ENCODE measurements at regions of chr14 and their contacts with region 1.

Region 1: DNA sequence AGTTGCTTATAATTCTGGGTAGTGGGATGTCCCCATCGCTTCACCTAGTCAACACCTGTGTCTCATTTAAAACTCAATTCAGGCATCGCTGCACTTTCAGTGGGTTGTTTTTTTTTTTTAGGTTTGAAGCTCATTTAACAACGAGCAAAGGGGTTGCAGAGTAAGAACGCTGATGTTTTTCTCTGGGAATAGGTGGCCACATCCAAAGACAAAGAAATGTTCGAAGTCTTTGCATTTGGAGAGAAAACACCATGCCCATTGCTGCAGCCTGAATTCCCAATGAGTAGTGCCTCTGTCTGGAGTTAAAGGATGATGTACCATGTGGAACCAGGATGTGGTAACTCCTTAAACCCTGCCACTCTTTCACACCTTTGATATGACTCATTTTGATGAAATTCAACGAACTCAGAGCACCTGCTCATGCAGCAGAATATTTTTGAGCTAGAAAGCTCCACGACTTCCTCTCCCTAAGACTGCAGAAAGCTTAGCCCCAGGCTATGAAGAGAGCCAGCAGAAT is 35.1 kb upstream of the BATF start:
- DNase-seq: no peak
- ATAC-seq: no peak
- H3K4me3 ChIP-seq: no peak overlapping the region
- H3K27ac ChIP-seq: no peak overlapping the region
- H3K4me1 ChIP-seq: no peaks in the 10 kb centered on the region
- H3K27me3 ChIP-seq: peaks cover 30% of the 10 kb centered on the region
- CTCF ChIP-seq: no peak
- POLR2A ChIP-seq: no peak
- RAD21 ChIP-seq: no peak

Region 2: GRCh38 chr14:75132382-75133086 is 354.7 kb before region 1 on chr14:
- CTCF ChIA-PET with region 1: no interaction called
- POLR2A ChIA-PET with region 1: no interaction called
- dilution Hi-C with region 1: no loop called
- in situ Hi-C with region 1: loop called (anchors 10 kb)
- intact Hi-C with region 1: loop called (anchors 2 kb)
- DNase-seq: peak; percentile 74
- ATAC-seq: peak; percentile 95
- H3K4me3 ChIP-seq: no peak overlapping the region
- H3K27ac ChIP-seq: no peak overlapping the region
- H3K4me1 ChIP-seq: no peaks in the 10 kb centered on the region
- H3K27me3 ChIP-seq: no peaks in the 10 kb centered on the region
- CTCF ChIP-seq: peak; percentile 81
- POLR2A ChIP-seq: 0 out of 2 replicates have a peak, but pooled peaks have one; percentile 39
- RAD21 ChIP-seq: peak; percentile 89

Region 3: DNA sequence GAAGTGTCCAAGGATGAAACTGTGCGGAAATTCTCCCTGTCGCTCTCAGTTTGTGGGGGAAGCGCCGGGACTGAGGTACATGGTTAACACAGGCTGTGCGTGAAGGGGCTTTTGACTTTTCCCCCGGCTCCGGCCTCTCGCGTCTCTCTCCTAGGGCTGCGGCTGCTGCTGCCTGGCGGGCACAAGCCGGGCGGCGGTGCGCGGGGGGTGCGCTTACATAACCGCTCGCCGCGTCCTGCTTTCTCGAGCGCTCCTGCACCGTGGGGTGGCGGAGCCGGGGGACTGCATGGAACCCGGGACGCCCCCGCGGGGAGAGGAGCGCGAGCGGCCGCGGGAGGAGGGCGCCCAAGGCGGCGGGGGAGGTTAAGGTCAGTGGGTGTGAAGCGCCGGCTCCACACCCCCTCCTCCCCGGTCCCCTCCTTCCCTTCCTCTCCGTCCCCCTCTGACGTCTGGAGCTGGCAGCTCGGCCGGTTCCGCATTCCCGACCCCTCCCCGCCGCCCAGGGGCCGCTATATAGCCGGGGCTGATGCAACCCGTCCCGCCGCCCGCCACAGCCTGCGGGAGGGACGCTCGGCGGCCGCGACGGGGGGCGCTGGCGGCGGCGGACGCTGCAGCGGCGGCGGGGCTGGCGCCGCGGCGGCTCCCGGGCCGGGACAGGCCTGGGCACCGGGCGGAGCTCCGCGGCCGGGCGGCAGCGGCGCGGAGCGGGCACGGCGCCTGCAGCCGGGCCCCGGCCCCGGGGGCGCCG is 59.6 kb before region 1 on chr14 and contains the start of gene JDP2:
- CTCF ChIA-PET with region 1: interaction called, 4 read pairs
- POLR2A ChIA-PET with region 1: no interaction called
- dilution Hi-C with region 1: no loop called
- in situ Hi-C with region 1: no loop called
- intact Hi-C with region 1: loop called (anchors 1 kb)
- DNase-seq: peak; percentile 76
- ATAC-seq: peak; percentile 81
- H3K4me3 ChIP-seq: peak within 1 kb of the TSS; percentile 58
- H3K27ac ChIP-seq: peak within 1 kb of the TSS; percentile 83
- H3K4me1 ChIP-seq: peaks cover 21% of the 10 kb centered on the region
- H3K27me3 ChIP-seq: no peaks in the 10 kb centered on the region
- CTCF ChIP-seq: 0 out of 2 replicates have a peak, but pooled peaks have one; percentile 8
- POLR2A ChIP-seq: peak; percentile 82
- RAD21 ChIP-seq: 0 out of 2 replicates have a peak, but pooled peaks have one; percentile 12
- total RNA-seq, gene JDP2: 35.7 and 38.9 TPM in 2 replicates

Region 4: GRCh38 chr14:75560962-75561432 is 73.8 kb after region 1 on chr14:
- CTCF ChIA-PET with region 1: no interaction called
- POLR2A ChIA-PET with region 1: no interaction called
- dilution Hi-C with region 1: no loop called
- in situ Hi-C with region 1: no loop called
- intact Hi-C with region 1: loop called (anchors 1 kb)
- DNase-seq: peak; percentile 67
- ATAC-seq: peak; percentile 95
- H3K4me3 ChIP-seq: no peak overlapping the region
- H3K27ac ChIP-seq: no peak overlapping the region
- H3K4me1 ChIP-seq: no peaks in the 10 kb centered on the region; the same call in 1 of the 2 replicates
- H3K27me3 ChIP-seq: peaks cover 26% of the 10 kb centered on the region
- CTCF ChIP-seq: peak; percentile 84
- POLR2A ChIP-seq: 0 out of 2 replicates have a peak, but pooled peaks have one; percentile 20
- RAD21 ChIP-seq: peak; percentile 78

Region 5: DNA sequence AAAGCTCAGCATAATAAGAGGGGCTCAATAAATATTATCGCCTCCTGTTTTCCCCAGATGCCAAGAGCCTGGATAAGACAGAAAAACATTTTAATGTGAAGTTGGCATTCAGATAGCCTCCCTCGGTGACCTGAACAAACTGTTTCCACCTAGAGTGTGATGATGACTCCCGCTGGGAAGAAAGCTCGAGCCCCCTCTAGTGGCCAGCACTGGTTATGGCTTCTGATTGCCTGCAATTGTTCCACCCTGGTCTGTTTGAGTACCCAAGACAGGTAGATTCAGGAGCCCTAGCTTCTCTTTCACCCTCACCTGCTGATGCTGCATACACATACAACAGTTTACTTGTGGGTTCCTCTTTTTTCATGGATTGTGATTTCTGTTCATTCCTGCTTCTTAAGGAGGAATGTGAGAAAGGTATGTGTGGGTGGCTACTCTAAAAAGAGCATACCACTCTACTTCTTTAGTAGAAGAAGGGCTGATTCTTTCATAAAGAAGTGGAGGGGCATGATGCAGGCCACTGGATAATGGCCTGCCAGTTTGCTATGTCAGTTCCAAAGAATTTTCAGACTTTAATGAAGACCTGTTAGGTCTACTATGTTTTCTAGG is 167.0 kb after region 1 on chr14:
- CTCF ChIA-PET with region 1: no interaction called
- POLR2A ChIA-PET with region 1: no interaction called
- dilution Hi-C with region 1: no loop called
- in situ Hi-C with region 1: no loop called
- intact Hi-C with region 1: loop called (anchors 2 kb)
- DNase-seq: peak; percentile 53
- ATAC-seq: peak; percentile 99
- H3K4me3 ChIP-seq: no peak overlapping the region
- H3K27ac ChIP-seq: no peak overlapping the region
- H3K4me1 ChIP-seq: no peaks in the 10 kb centered on the region
- H3K27me3 ChIP-seq: no peaks in the 10 kb centered on the region
- CTCF ChIP-seq: peak; percentile 95
- POLR2A ChIP-seq: no peak
- RAD21 ChIP-seq: peak; percentile 90